Lower lobe of right lung (tissue), 2 donors: ENCODE measurements at regions of chr5 and their contacts with region 1.

Region 1: GRCh38 chr5:89560716-89561115 is 677.7 kb upstream of the MEF2C start:
- DNase-seq: no peak
- ATAC-seq: no peak
- H3K4me3 ChIP-seq: no peak overlapping the region
- H3K27ac ChIP-seq: no peak overlapping the region
- H3K4me1 ChIP-seq: no peaks in the 10 kb centered on the region
- H3K27me3 ChIP-seq: no peaks in the 10 kb centered on the region
- CTCF ChIP-seq: no peak

Region 2: DNA sequence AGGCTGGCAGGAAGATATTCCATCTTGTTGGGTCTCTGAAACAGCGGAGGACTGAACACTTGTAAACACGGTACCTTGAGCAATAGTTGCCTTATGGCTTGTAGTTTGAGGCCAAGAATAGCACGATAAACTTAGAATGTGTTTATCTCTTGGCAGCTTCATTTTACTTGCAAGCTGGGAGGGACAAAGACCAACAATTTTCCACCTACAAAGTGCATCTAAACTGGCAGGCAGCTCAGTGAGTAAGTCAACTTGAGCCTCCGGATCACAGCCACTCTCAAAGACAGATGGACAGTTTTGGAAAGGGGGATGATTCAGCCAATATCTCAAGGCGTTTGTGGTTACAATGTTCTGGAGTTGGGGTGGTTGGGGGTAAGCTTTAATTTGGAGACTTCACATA is 196.2 kb after region 1 on chr5:
- intact Hi-C with region 1: loop called (anchors 5 kb)
- DNase-seq: no peak
- ATAC-seq: no peak
- H3K4me3 ChIP-seq: no peak overlapping the region
- H3K27ac ChIP-seq: no peak overlapping the region
- H3K4me1 ChIP-seq: no peaks in the 10 kb centered on the region
- H3K27me3 ChIP-seq: no peaks in the 10 kb centered on the region
- CTCF ChIP-seq: no peak